MCF 10A (cell line): ENCODE measurements at regions of chr10 and their contacts with region 1.

Region 1: DNA sequence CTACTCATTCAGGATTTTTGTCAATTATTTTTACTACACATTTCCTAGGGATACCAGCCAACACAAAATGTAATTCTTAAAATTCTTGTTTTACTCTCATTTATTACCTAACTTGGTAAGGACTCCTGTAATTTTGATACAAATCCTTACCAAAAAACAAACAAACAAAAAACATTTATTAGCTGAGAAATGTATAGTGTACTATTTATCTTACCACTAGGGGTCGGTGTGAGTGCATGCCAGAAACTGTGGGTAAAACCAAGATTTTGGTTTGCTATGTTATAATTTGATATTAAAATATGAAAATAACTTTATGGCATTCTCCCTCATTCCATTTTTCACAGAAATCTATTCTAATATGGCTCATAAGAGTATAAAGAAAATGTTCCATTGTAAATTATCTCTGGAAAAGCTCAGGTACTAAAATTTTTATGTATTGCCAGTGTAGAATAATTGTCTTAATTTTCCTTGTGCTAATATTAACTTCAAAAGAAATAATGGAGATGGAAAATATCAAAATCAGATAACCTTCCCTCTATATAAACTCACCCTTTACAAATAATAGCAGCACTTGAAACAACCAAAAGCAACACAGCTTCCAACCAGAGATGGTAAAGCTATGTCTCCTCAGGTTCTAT is 290.8 kb upstream of the PCDH15 start:
- DNase-seq: peak; percentile 17
- H3K4me3 Mint-ChIP-seq: no peak overlapping the region
- H3K27ac Mint-ChIP-seq: no peak overlapping the region
- H3K4me1 Mint-ChIP-seq: no peaks in the 10 kb centered on the region
- H3K27me3 Mint-ChIP-seq: peaks cover 13% of the 10 kb centered on the region
- CTCF ChIP-seq: peak; percentile 62

Region 2: GRCh38 chr10:55078121-55078520 is 13.7 kb before region 1 on chr10:
- CTCF ChIA-PET with region 1: no interaction called
- POLR2A ChIA-PET with region 1: no interaction called
- intact Hi-C with region 1: no loop called
- DNase-seq: no peak
- H3K4me3 Mint-ChIP-seq: no peak overlapping the region
- H3K27ac Mint-ChIP-seq: no peak overlapping the region
- H3K4me1 Mint-ChIP-seq: no peaks in the 10 kb centered on the region
- H3K27me3 Mint-ChIP-seq: peaks cover 52% of the 10 kb centered on the region
- CTCF ChIP-seq: no peak

Region 3: DNA sequence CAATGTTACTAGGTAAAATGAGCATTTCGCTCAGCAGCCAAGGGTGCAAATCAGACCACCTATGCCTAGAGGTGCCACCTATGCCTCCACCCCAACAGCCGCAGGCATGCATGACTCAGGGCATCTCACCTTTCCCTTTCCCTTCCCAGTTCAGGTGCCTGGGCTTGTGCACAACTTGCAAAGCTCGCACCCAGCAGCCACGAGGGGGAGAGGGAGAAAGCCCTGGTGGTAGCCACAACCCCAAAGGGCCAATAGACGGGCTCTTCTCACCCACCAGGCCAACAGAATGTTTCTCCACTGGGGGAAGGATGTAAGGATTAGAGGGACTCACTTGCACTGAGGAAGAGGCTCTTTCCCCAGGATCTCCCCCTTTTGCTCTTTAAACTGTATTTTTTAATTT is 171.5 kb after region 1 on chr10:
- CTCF ChIA-PET with region 1: interaction called, 4 read pairs
- POLR2A ChIA-PET with region 1: no interaction called
- intact Hi-C with region 1: loop called (anchors 1 kb)
- DNase-seq: no peak
- H3K4me3 Mint-ChIP-seq: no peak overlapping the region
- H3K27ac Mint-ChIP-seq: no peak overlapping the region
- H3K4me1 Mint-ChIP-seq: no peaks in the 10 kb centered on the region
- H3K27me3 Mint-ChIP-seq: peaks cover 66% of the 10 kb centered on the region
- CTCF ChIP-seq: no peak

Region 4: GRCh38 chr10:55500932-55501559 is 409.2 kb after region 1 on chr10:
- CTCF ChIA-PET with region 1: no interaction called
- POLR2A ChIA-PET with region 1: no interaction called
- intact Hi-C with region 1: loop called (anchors 2 kb)
- DNase-seq: peak; percentile 53
- H3K4me3 Mint-ChIP-seq: no peak overlapping the region
- H3K27ac Mint-ChIP-seq: no peak overlapping the region
- H3K4me1 Mint-ChIP-seq: no peaks in the 10 kb centered on the region
- H3K27me3 Mint-ChIP-seq: peaks cover 33% of the 10 kb centered on the region
- CTCF ChIP-seq: peak; percentile 46

Region 5: DNA sequence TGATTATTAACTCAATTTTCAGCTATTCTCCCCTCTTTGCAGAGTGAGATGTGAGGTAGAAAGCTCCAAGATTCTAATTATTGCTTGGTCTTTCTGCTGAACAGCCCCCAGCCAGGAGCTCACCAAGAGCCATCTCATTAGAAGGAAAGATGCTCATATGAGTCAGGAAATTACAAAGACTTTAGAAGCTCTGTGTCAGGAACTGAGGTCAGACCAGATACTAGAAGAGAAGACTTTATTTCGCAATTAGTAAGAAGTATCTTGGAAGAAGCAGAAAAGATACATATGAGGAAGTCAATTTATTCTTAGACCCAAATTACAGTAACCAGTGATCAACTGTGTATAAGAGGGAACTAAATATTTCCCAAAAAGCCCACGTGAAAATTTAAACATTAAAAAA is 642.3 kb after region 1 on chr10:
- CTCF ChIA-PET with region 1: no interaction called
- POLR2A ChIA-PET with region 1: no interaction called
- intact Hi-C with region 1: loop called (anchors 2 kb)
- DNase-seq: no peak
- H3K4me3 Mint-ChIP-seq: no peak overlapping the region
- H3K27ac Mint-ChIP-seq: no peak overlapping the region
- H3K4me1 Mint-ChIP-seq: no peaks in the 10 kb centered on the region
- H3K27me3 Mint-ChIP-seq: peaks cover 43% of the 10 kb centered on the region
- CTCF ChIP-seq: no peak